Mammary epithelial cell (primary cell): ENCODE measurements at regions of chr7 and their contacts with region 1.

Region 1: DNA sequence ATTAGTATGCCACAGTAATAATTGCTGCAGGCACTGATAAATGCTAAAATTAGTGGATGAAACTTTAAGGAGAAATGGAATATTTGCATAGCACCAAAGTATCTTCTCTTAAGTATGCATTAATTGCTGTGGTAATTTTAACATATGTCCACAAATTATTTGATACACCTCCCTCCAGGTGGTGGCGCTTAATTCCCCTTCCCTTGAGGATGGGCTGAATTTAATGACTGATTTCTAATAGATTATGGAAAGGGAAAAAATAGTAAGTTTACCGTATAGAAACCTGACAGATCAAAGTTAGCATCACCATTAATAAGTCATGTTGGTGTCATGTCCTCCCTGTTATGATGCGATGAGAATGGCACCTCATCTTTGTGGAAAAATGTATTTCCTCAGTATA is 519.2 kb downstream of the TFEC start:
- DNase-seq: no peak
- H3K4me3 ChIP-seq: no peak overlapping the region
- H3K27ac ChIP-seq: no peak overlapping the region
- H3K4me1 ChIP-seq: no peaks in the 10 kb centered on the region
- H3K27me3 ChIP-seq: peaks cover 7% of the 10 kb centered on the region
- CTCF ChIP-seq: peak in 1 of 2 donors; percentile 29

Region 2: DNA sequence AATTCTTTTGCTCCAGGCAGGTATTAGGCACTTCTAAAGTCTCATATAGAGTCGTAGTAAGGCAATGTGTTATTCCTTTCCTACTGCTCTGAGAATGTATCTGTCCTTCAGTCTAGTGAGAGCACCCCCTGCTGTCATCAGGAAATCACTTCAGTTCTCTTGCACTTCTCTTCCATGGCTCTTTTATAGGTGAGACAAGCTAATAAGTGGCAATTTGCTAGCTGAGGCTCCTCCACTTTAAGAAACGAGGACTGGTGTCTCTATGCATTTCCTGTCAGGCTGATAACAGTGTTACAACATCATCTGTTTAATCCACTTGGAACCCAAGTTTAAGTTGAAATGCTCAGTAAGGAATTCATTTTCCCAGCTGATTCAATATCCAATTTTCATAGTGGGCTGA is 168.6 kb after region 1 on chr7:
- CTCF ChIA-PET with region 1: no interaction called
- dilution Hi-C with region 1: no loop called
- in situ Hi-C with region 1: no loop called
- intact Hi-C with region 1: loop called (anchors 5 kb)
- DNase-seq: peak; percentile 29
- H3K4me3 ChIP-seq: no peak overlapping the region
- H3K27ac ChIP-seq: no peak overlapping the region
- H3K4me1 ChIP-seq: no peaks in the 10 kb centered on the region
- H3K27me3 ChIP-seq: no peaks in the 10 kb centered on the region
- CTCF ChIP-seq: peak; percentile 65 to 68